Posterior vena cava (tissue), 2 donors: ENCODE measurements at regions of chr2 and their contacts with region 1.

Region 1: GRCh38 chr2:69428981-69429380 is 8.3 kb downstream of the NFU1 start:
- DNase-seq: no peak

Region 2: GRCh38 chr2:69456950-69457445 is 28.0 kb after region 1 on chr2:
- intact Hi-C with region 1: loop called in 1 of 2 experiments (anchors 1 kb)
- DNase-seq: no peak